ENCODE measurements at regions of chr19 and their contacts with region 1.

Region 1: GRCh38 chr19:51338563-51339312 is 3.2 kb downstream of the VSIG10L start:
- DNase-seq: peak; percentile 80 to 86 (median 82)
- H3K4me3 ChIP-seq: peak overlapping the region; percentile 70 to 77
- H3K4me3 Mint-ChIP-seq: peak overlapping the region; percentile 78 to 92 (median 88)
- H3K27ac ChIP-seq: no peak overlapping the region
- H3K27ac Mint-ChIP-seq: peak overlapping the region; percentile 18 to 84 (median 57)
- H3K4me1 ChIP-seq: peaks cover 15% of the 10 kb centered on the region
- H3K4me1 Mint-ChIP-seq: peaks cover 12 to 27% (median 19%) of the 10 kb centered on the region in 4 donors
- H3K27me3 ChIP-seq: no peaks in the 10 kb centered on the region
- H3K27me3 Mint-ChIP-seq: peaks cover 0 to 3% of the 10 kb centered on the region in 2 donors

Region 2: DNA sequence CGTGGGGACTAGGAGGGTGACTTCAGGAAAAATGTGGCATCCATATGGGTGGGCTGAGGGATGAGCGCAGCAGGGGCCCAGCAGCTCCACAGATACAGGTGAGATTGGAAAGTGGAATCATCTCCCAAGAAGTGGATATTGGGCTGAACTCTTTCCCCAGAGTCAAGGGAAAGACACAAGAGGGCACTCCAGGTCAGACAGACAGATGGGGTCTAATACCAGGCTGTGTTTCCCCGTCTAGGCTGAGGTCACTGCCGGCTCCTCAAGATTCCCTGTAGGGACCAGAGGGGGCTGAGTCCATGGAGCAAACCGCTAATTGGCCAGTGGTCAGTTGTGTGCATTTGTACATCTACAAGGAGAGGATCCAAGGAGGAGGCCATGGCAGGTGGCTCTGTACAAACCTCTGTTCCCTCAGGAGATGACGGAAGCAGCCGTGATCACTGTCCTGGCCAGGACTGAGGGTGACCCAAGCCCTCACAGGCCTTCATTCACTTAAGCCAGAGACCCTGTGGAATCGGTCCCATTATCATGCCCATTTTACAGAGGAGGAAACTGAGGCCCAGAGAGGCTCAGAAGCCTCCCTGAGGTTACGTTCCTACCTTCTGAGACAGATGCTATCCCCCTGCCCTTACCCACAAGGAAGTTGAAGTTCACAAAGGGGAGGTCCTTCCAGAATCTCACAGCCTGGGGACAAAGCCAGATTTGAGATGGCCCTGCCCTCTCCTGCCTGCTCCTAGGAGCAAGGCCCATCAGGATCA is 42.2 kb before region 1 on chr19:
- CTCF ChIA-PET with region 1: no interaction called
- POLR2A ChIA-PET with region 1: no interaction called
- intact Hi-C with region 1: no loop called
- DNase-seq: no peak
- H3K4me3 ChIP-seq: no peak overlapping the region
- H3K4me3 Mint-ChIP-seq: no peak overlapping the region
- H3K27ac ChIP-seq: no peak overlapping the region
- H3K27ac Mint-ChIP-seq: no peak overlapping the region
- H3K4me1 ChIP-seq: no peaks in the 10 kb centered on the region
- H3K4me1 Mint-ChIP-seq: no peaks in the 10 kb centered on the region
- H3K27me3 ChIP-seq: no peaks in the 10 kb centered on the region
- H3K27me3 Mint-ChIP-seq: peaks cover 13% of the 10 kb centered on the region in 2 donors

Region 3: GRCh38 chr19:51367565-51368365 is 29.0 kb after region 1 on chr19:
- CTCF ChIA-PET with region 1: interaction called, 4 read pairs
- POLR2A ChIA-PET with region 1: interaction called, 10 read pairs
- intact Hi-C with region 1: loop called (anchors 1 kb)
- DNase-seq: peak; percentile 89 to 95 (median 91)
- H3K4me3 ChIP-seq: peak overlapping the region; percentile 83 to 85
- H3K4me3 Mint-ChIP-seq: peak overlapping the region; percentile 92 to 100 (median 98)
- H3K27ac ChIP-seq: peak overlapping the region; percentile 77
- H3K27ac Mint-ChIP-seq: peak overlapping the region; percentile 87 to 98 (median 96)
- H3K4me1 ChIP-seq: peaks cover 67% of the 10 kb centered on the region
- H3K4me1 Mint-ChIP-seq: peaks cover 49 to 88% (median 64%) of the 10 kb centered on the region in 4 donors
- H3K27me3 ChIP-seq: no peaks in the 10 kb centered on the region
- H3K27me3 Mint-ChIP-seq: no peaks in the 10 kb centered on the region

Region 4: DNA sequence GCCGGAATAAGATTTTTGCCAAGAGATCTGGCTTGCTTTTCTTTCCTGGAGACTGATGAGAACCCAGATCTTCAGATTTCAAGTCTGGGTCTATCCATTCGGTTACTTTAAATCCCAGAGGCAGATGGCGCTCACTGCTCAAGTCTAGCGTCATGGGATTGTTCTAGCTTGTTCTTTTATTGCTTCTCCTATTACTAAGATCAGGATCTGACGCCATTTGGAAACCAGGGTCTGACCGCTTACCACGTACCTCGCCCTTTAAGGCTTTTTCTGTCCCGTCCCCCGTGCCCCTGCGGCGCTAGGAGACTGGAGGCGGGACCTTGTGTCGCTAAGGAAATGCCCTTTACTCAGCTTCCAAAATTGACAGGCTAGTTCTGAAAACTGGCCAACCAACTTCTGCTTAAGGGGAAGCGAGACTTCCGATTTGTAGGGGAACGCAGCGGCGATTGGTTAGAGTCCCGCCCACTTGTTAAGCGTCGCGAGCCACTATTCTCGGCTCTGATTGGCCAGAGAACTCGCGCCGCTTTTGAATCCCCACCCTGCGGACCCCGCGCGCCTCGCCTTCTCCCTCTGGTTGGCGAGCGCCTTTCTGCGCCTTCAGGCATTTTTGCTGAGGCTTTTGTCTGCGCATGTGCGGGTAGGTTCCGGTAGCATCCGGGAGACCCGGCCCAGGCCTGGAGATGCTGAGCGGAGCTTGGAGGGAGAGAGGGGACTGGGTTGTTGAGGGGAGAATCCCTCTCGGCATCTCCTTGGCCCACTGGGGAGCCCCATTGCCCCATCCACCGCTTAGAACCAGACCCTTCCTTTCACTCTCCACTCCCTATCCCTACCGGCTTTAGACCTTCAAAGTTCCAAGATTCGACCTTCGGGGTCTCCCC is 55.5 kb after region 1 on chr19:
- CTCF ChIA-PET with region 1: interaction called, 7 read pairs
- POLR2A ChIA-PET with region 1: no interaction called
- intact Hi-C with region 1: loop called (anchors 1 kb)
- DNase-seq: peak; percentile 88 to 92 (median 89)
- H3K4me3 ChIP-seq: peak overlapping the region; percentile 55 to 76
- H3K4me3 Mint-ChIP-seq: peak overlapping the region; percentile 85 to 94 (median 90)
- H3K27ac ChIP-seq: peak overlapping the region; percentile 24
- H3K27ac Mint-ChIP-seq: peak overlapping the region; percentile 88 to 95 (median 94)
- H3K4me1 ChIP-seq: peaks cover 13% of the 10 kb centered on the region
- H3K4me1 Mint-ChIP-seq: peaks cover 11 to 30% (median 20%) of the 10 kb centered on the region in 4 donors
- H3K27me3 ChIP-seq: no peaks in the 10 kb centered on the region
- H3K27me3 Mint-ChIP-seq: no peaks in the 10 kb centered on the region

Region 5: DNA sequence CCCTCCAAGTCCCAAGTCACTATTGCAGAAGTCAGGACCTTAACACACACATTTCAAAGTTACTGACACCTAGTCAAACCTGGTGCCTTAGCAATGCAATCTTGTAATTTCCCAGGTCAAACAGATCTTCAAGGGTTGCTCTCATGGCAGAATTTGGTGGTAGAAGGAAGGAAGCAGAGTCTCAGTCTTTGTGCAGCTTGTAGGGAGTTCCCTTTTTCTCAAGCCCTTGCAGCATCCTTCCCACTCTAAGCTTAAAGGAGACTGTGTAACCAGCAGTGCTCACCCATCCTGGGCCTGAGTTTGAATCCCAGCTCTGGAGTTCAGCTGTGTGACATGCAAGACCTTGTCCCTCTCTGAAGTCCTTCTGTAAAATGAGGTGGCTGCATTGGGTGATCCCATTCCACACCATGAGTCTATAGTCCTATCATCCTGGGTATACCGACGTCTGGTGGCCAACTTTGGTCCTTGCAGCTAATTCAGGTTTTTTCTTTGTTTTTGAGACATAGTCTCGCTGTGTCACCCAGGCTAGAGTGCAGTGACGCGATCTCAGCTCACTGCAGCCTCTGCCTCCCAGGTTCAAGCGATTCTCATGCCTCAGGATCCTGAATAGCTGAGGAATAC is 68.9 kb after region 1 on chr19:
- CTCF ChIA-PET with region 1: interaction called, 6 read pairs
- POLR2A ChIA-PET with region 1: no interaction called
- intact Hi-C with region 1: loop called (anchors 1 kb)
- DNase-seq: peak in 4 of 5 donors; percentile 13 to 30 (median 24)
- H3K4me3 ChIP-seq: no peak overlapping the region
- H3K4me3 Mint-ChIP-seq: no peak overlapping the region
- H3K27ac ChIP-seq: no peak overlapping the region
- H3K27ac Mint-ChIP-seq: no peak overlapping the region
- H3K4me1 ChIP-seq: no peaks in the 10 kb centered on the region
- H3K4me1 Mint-ChIP-seq: peaks cover 0 to 2% (median 0%) of the 10 kb centered on the region in 4 donors
- H3K27me3 ChIP-seq: no peaks in the 10 kb centered on the region
- H3K27me3 Mint-ChIP-seq: peaks cover 4 to 5% of the 10 kb centered on the region in 2 donors

Region 6: GRCh38 chr19:51422053-51422448 is 83.3 kb after region 1 on chr19:
- CTCF ChIA-PET with region 1: interaction called, 4 read pairs
- POLR2A ChIA-PET with region 1: no interaction called
- intact Hi-C with region 1: loop called (anchors 1 kb)
- DNase-seq: peak; percentile 67 to 75 (median 69)
- H3K4me3 ChIP-seq: no peak overlapping the region
- H3K4me3 Mint-ChIP-seq: no peak overlapping the region
- H3K27ac ChIP-seq: no peak overlapping the region
- H3K27ac Mint-ChIP-seq: peak overlapping the region in 1 of 7 donors; percentile 24
- H3K4me1 ChIP-seq: no peaks in the 10 kb centered on the region
- H3K4me1 Mint-ChIP-seq: peaks cover 0 to 8% (median 3%) of the 10 kb centered on the region in 4 donors
- H3K27me3 ChIP-seq: no peaks in the 10 kb centered on the region
- H3K27me3 Mint-ChIP-seq: peaks cover 8 to 18% of the 10 kb centered on the region in 2 donors

Region 7: DNA sequence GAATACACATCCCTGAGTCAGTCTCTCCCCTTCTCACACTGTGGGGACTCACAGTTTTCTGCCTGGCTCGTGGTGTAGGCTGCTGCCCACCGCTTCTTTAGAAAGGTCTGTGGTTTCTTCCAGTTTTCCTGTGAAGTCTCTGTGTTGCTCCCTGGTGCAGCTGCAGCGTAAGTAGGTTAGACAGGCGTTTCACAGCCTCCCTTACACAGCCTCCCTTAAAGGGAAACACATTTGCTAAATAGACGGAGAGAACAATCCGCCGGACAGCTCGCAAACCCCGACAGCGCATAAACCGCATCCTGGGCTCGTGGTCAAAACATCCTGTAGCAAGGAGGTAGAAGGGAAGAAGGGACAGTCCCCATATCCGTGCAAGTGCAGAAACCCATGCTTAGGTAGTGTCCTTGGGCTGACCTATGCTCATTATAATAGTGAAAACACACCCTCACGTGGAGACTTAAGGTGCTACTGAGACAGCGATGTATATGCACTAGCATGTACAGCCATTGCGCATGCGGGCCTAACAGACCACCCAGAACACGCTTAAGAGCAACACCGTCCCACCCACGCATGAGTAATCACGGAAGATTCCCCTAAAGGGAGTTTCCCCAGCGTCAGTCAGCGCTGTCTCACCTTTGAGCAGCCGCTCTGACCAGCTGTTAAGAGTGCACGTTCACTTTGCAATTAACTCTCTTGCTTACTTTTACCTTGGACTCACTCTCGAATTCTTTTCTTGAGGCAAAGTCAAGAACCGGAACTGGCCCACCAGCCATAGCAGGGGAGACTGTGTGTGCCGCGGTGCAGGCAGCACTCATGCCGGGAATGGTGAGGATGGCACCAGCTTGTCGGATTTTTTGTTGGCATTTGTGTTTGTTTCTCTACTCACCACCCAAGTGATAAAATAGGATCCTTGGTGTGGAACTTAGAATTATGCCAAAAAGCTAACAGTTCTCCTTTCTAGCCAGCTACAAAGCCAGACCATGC is 103.0 kb after region 1 on chr19:
- CTCF ChIA-PET with region 1: interaction called, 7 read pairs
- POLR2A ChIA-PET with region 1: no interaction called
- intact Hi-C with region 1: loop called (anchors 1 kb)
- DNase-seq: peak; percentile 81 to 95 (median 85)
- H3K4me3 ChIP-seq: peak overlapping the region; percentile 17 to 36
- H3K4me3 Mint-ChIP-seq: peak overlapping the region; percentile 73 to 91 (median 84)
- H3K27ac ChIP-seq: peak overlapping the region; percentile 70
- H3K27ac Mint-ChIP-seq: peak overlapping the region; percentile 85 to 98 (median 94)
- H3K4me1 ChIP-seq: peaks cover 47% of the 10 kb centered on the region
- H3K4me1 Mint-ChIP-seq: peaks cover 24 to 48% (median 36%) of the 10 kb centered on the region in 4 donors
- H3K27me3 ChIP-seq: no peaks in the 10 kb centered on the region
- H3K27me3 Mint-ChIP-seq: peaks cover 3 to 5% of the 10 kb centered on the region in 2 donors

Region 8: GRCh38 chr19:51514866-51515481 is 176.2 kb after region 1 on chr19:
- CTCF ChIA-PET with region 1: interaction called, 4 read pairs
- POLR2A ChIA-PET with region 1: no interaction called
- intact Hi-C with region 1: loop called (anchors 1 kb)
- DNase-seq: peak; percentile 33 to 44 (median 38)
- H3K4me3 ChIP-seq: no peak overlapping the region
- H3K4me3 Mint-ChIP-seq: no peak overlapping the region
- H3K27ac ChIP-seq: no peak overlapping the region
- H3K27ac Mint-ChIP-seq: peak overlapping the region in 1 of 7 donors; percentile 57
- H3K4me1 ChIP-seq: no peaks in the 10 kb centered on the region
- H3K4me1 Mint-ChIP-seq: no peaks in the 10 kb centered on the region
- H3K27me3 ChIP-seq: peaks cover 4% of the 10 kb centered on the region
- H3K27me3 Mint-ChIP-seq: peaks cover 21 to 22% of the 10 kb centered on the region in 2 donors

Region 9: DNA sequence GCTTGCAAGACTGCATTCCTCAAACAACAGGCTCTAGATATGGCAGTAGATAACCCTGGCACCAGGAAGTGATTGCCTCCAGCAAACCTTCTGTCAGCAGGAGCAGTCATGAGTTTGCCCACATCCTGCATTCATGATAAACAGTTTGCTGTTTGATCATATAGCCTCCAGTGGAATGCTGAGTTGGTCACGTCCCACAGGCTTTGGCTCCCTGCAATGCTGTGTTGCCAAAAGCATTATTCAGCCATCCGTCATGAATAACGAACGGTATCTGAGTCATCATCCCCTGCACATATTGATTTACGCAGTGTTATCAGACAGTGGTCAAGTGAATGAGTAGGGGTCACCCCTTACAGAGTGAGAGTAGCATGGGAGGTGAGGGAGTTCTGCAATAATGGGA is 731.7 kb after region 1 on chr19:
- CTCF ChIA-PET with region 1: no interaction called
- POLR2A ChIA-PET with region 1: no interaction called
- intact Hi-C with region 1: no loop called
- DNase-seq: no peak
- H3K4me3 ChIP-seq: no peak overlapping the region
- H3K4me3 Mint-ChIP-seq: peak overlapping the region in 3 of 8 donors; percentile 19 to 55 (median 32)
- H3K27ac ChIP-seq: no peak overlapping the region
- H3K27ac Mint-ChIP-seq: no peak overlapping the region
- H3K4me1 ChIP-seq: no peaks in the 10 kb centered on the region
- H3K4me1 Mint-ChIP-seq: peaks cover 0 to 3% (median 0%) of the 10 kb centered on the region in 4 donors
- H3K27me3 ChIP-seq: no peaks in the 10 kb centered on the region
- H3K27me3 Mint-ChIP-seq: no peaks in the 10 kb centered on the region

Measured in CD4-positive, alpha-beta memory T cell (primary cell).